PC-9 (cell line): ENCODE measurements at regions of chr16 and their contacts with region 1.

Region 1: GRCh38 chr16:11639925-11640899 is 28.0 kb upstream of the SNN start:
- DNase-seq: peak; percentile 92 to 97
- H3K4me3 ChIP-seq: peak overlapping the region; percentile 36; the same call in 1 of the 2 replicates
- H3K27ac ChIP-seq: peak overlapping the region; percentile 99
- H3K4me1 ChIP-seq: peaks cover 49% of the 10 kb centered on the region
- H3K27me3 ChIP-seq: no peaks in the 10 kb centered on the region
- CTCF ChIP-seq: no peak

Region 2: GRCh38 chr16:11149011-11149616 is 491.1 kb before region 1 on chr16:
- CTCF ChIA-PET with region 1: no interaction called
- POLR2A ChIA-PET with region 1: interaction called, 11 read pairs
- intact Hi-C with region 1: no loop called
- DNase-seq: no peak
- H3K4me3 ChIP-seq: no peak overlapping the region
- H3K27ac ChIP-seq: no peak overlapping the region
- H3K4me1 ChIP-seq: no peaks in the 10 kb centered on the region
- H3K27me3 ChIP-seq: no peaks in the 10 kb centered on the region
- CTCF ChIP-seq: no peak

Region 3: GRCh38 chr16:11497851-11498289 is 142.3 kb before region 1 on chr16:
- CTCF ChIA-PET with region 1: no interaction called
- POLR2A ChIA-PET with region 1: no interaction called
- intact Hi-C with region 1: loop called (anchors 1 kb)
- DNase-seq: peak in 1 of 2 experiments; percentile 65
- H3K4me3 ChIP-seq: no peak overlapping the region
- H3K27ac ChIP-seq: peak overlapping the region; percentile 50
- H3K4me1 ChIP-seq: peaks cover 20% of the 10 kb centered on the region
- H3K27me3 ChIP-seq: no peaks in the 10 kb centered on the region
- CTCF ChIP-seq: no peak

Region 4: GRCh38 chr16:11597239-11598101 is 42.7 kb before region 1 on chr16:
- CTCF ChIA-PET with region 1: interaction called, 3 read pairs
- POLR2A ChIA-PET with region 1: interaction called, 7 read pairs
- intact Hi-C with region 1: loop called (anchors 1 kb)
- DNase-seq: peak; percentile 74 to 77
- H3K4me3 ChIP-seq: no peak overlapping the region
- H3K27ac ChIP-seq: peak overlapping the region; percentile 84
- H3K4me1 ChIP-seq: peaks cover 41% of the 10 kb centered on the region
- H3K27me3 ChIP-seq: no peaks in the 10 kb centered on the region
- CTCF ChIP-seq: no peak

Region 5: GRCh38 chr16:11613381-11614303 is 26.6 kb before region 1 on chr16:
- CTCF ChIA-PET with region 1: interaction called, 4 read pairs
- POLR2A ChIA-PET with region 1: interaction called, 7 read pairs
- intact Hi-C with region 1: loop called (anchors 1 kb)
- DNase-seq: peak; percentile 54 to 70
- H3K4me3 ChIP-seq: no peak overlapping the region
- H3K27ac ChIP-seq: peak overlapping the region; percentile 94
- H3K4me1 ChIP-seq: peaks cover 84% of the 10 kb centered on the region
- H3K27me3 ChIP-seq: no peaks in the 10 kb centered on the region
- CTCF ChIP-seq: no peak

Region 6: GRCh38 chr16:11629071-11629962 is 10.9 kb before region 1 on chr16:
- CTCF ChIA-PET with region 1: interaction called, 3 read pairs
- POLR2A ChIA-PET with region 1: interaction called, 12 read pairs
- intact Hi-C with region 1: loop called (anchors 1 kb)
- DNase-seq: no peak
- H3K4me3 ChIP-seq: no peak overlapping the region
- H3K27ac ChIP-seq: peak overlapping the region; percentile 98
- H3K4me1 ChIP-seq: peaks cover 49% of the 10 kb centered on the region
- H3K27me3 ChIP-seq: no peaks in the 10 kb centered on the region
- CTCF ChIP-seq: no peak